Sigmoid colon (tissue), 7 donors: ENCODE measurements at regions of chr2 and their contacts with region 1.

Region 1: GRCh38 chr2:166516712-166517303 is 22.8 kb upstream of the SCN7A start:
- DNase-seq: no peak
- H3K4me3 ChIP-seq: no peak overlapping the region
- H3K27ac ChIP-seq: no peak overlapping the region
- H3K4me1 ChIP-seq: peaks cover 0 to 65% (median 15%) of the 10 kb centered on the region in 4 donors
- H3K27me3 ChIP-seq: no peaks in the 10 kb centered on the region
- CTCF ChIP-seq: peak; percentile 47 to 69 (median 60)
- EP300 ChIP-seq: no peak
- POLR2A ChIP-seq: no peak

Region 2: DNA sequence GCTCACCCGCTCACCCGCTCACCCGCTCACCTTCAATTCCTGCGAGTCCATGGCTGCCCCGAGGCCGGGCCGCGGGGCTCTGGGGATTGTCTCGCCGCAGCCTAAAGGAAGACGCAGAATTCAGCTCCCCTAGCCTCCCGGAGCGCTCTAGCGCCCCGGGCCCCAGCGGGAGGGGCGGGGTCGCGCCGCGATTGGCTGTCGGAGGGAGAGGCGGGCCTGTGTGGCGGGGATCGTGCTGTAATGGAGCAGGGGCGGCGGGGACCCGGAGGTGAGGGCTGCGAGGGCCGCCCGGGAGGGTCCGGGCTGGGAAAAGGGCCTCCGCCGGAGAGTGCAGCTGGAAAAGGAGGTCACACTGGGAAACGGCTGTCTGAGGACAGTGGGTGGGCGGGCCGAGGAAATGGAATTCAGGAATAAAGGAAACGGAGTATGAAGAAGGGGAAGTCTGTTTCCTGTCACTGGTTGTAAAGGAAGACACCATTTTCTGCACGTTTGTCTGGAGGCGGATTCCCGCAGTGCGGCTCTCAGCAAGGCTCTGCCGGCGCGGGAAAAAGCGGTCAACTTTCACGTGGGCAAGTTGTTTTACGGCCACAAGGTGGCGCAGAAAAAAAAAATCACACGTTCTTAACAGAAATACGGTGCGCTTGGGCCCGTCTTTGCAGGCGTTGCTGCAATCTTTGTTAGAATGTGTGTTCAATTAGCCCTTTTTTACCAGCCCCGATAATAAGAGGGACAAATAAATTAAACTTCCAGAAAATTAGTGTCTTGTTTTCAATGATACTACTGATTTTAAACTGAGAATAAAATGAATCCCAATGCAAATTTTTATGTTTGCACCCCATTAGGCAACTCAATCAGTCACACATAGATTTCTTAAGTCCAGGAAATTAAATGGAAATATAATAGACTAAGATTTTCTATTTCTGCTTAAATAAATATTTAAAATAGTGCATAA is 562.9 kb before region 1 on chr2 and contains the start of gene TTC21B:
- intact Hi-C with region 1: loop called (anchors 10 kb)
- DNase-seq: peak; percentile 96
- H3K4me3 ChIP-seq: peak within 1 kb of the TSS; percentile 68 to 88 (median 76)
- H3K27ac ChIP-seq: peak within 1 kb of the TSS; percentile 85 to 91 (median 89)
- H3K4me1 ChIP-seq: peaks cover 0 to 41% (median 23%) of the 10 kb centered on the region in 4 donors
- H3K27me3 ChIP-seq: no peaks in the 10 kb centered on the region
- CTCF ChIP-seq: peak; percentile 67 to 81 (median 74)
- EP300 ChIP-seq: peak in 1 of 4 donors; percentile 33
- POLR2A ChIP-seq: peak; percentile 44 to 45
- total RNA-seq, gene TTC21B: 15.6 to 33.5 (median 28.8) TPM

Region 3: DNA sequence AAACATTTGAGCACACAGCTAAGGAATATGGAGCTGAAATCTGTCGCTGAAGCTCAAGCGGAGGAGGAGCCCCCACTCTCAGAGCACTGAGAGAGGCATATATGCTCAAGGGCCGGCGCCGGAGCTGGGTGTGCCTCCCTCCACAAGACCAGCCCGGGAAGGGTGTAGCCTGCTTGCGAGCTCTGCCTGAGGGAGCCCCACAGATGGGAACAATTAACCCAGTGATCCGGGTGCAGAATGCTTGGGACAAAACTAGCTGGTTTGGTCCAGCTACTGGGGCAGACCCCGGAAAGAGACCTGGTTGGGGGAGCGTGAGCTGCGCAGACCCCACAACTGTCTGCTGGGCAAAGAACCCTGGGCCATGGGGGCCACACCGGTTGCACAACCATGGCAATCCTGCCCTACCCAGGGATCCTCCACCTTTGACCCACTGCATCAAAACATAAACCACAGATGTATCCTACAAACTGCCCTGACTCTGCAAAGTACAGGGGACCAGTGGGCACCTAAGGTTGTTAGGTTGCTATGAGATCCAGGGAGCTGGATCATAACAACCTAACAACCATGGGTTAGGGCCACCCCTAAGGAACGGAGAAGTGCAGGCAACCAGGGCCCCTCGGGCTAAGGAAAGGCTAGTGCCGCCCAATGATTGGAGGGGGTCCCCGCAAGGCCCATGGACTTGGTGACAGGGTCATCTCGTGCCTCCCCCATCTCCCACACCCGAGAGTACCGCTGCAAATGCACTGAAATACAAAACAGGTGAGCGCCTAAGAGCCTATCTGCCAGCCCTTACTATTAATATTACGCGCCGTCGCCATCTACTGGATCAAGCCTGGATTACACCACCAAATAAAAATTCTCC is 335.6 kb before region 1 on chr2:
- intact Hi-C with region 1: loop called (anchors 5 kb)
- DNase-seq: no peak
- H3K4me3 ChIP-seq: no peak overlapping the region
- H3K27ac ChIP-seq: no peak overlapping the region
- H3K4me1 ChIP-seq: peaks cover 0 to 29% (median 0%) of the 10 kb centered on the region in 4 donors
- H3K27me3 ChIP-seq: no peaks in the 10 kb centered on the region
- CTCF ChIP-seq: peak in 2 of 4 experiments; percentile 21 to 49
- EP300 ChIP-seq: no peak
- POLR2A ChIP-seq: no peak

Region 4: DNA sequence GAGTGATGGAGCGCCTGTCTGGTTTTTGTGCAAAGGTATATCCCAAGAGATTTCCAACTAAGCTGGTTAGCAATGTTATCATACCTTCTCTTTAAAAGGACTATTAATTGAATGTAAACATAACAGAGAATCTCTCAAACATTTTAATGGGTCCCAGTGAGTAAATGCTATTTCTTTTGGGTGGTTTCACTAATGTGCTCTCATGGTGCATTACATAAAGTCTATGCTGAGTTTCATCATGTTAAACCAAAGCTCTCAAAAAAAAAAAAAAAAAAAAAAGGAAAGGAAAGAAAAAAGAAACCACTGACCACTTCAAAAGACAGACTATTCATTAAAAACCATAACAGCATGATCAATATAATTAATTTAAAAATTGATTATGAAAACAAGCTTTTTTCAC is 269.9 kb before region 1 on chr2:
- intact Hi-C with region 1: no loop called
- DNase-seq: no peak
- H3K4me3 ChIP-seq: no peak overlapping the region
- H3K27ac ChIP-seq: no peak overlapping the region
- H3K4me1 ChIP-seq: no peaks in the 10 kb centered on the region
- H3K27me3 ChIP-seq: no peaks in the 10 kb centered on the region
- CTCF ChIP-seq: no peak
- EP300 ChIP-seq: no peak
- POLR2A ChIP-seq: no peak

Region 5: GRCh38 chr2:166361351-166362153 is 155.3 kb before region 1 on chr2:
- intact Hi-C with region 1: loop called (anchors 5 kb)
- DNase-seq: no peak
- H3K4me3 ChIP-seq: no peak overlapping the region
- H3K27ac ChIP-seq: no peak overlapping the region
- H3K4me1 ChIP-seq: peaks cover 0 to 8% (median 0%) of the 10 kb centered on the region in 4 donors
- H3K27me3 ChIP-seq: no peaks in the 10 kb centered on the region
- CTCF ChIP-seq: peak; percentile 21 to 47 (median 39)
- EP300 ChIP-seq: no peak
- POLR2A ChIP-seq: no peak

Region 6: GRCh38 chr2:166384774-166385173 is 132.0 kb before region 1 on chr2:
- intact Hi-C with region 1: loop called (anchors 5 kb)
- DNase-seq: no peak
- H3K4me3 ChIP-seq: no peak overlapping the region
- H3K27ac ChIP-seq: no peak overlapping the region
- H3K4me1 ChIP-seq: no peaks in the 10 kb centered on the region
- H3K27me3 ChIP-seq: no peaks in the 10 kb centered on the region
- CTCF ChIP-seq: peak; percentile 20 to 60 (median 48)
- EP300 ChIP-seq: no peak
- POLR2A ChIP-seq: no peak

Region 7: DNA sequence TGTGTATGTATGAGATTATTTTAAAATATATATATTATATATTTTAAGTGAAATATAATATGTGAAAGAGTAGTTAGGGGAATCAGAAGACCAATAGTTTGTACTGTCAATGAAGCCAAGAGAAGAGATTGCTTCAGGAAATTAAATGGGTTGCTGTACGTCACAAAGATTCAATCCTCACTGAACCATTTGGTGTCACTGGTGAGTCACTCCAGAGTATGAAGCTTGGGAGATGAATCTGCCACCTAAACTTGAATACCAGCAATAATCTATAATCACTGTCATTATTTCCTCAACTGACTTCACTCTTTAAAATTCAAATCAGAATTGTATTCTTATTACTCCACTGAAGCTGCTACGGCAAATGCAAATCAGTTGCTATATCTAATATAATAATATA is 99.1 kb before region 1 on chr2:
- intact Hi-C with region 1: loop called (anchors 1 kb)
- DNase-seq: no peak
- H3K4me3 ChIP-seq: no peak overlapping the region
- H3K27ac ChIP-seq: no peak overlapping the region
- H3K4me1 ChIP-seq: peaks cover 0 to 8% (median 0%) of the 10 kb centered on the region in 4 donors
- H3K27me3 ChIP-seq: no peaks in the 10 kb centered on the region
- CTCF ChIP-seq: peak in 1 of 4 experiments; percentile 25
- EP300 ChIP-seq: no peak
- POLR2A ChIP-seq: no peak